IMR-90 (cell line): ENCODE measurements at regions of chr3 and their contacts with region 1.

Region 1: GRCh38 chr3:34725794-34726193 is 913.5 kb upstream of the ARPP21 start:
- DNase-seq: no peak
- ATAC-seq: no peak
- H3K4me3 ChIP-seq: no peak overlapping the region
- H3K27ac ChIP-seq: no peak overlapping the region
- H3K4me1 ChIP-seq: no peaks in the 10 kb centered on the region
- H3K27me3 ChIP-seq: no peaks in the 10 kb centered on the region
- CTCF ChIP-seq: no peak
- POLR2A ChIP-seq: no peak
- RAD21 ChIP-seq: no peak

Region 2: GRCh38 chr3:34239875-34240274 is 485.9 kb before region 1 on chr3:
- CTCF ChIA-PET with region 1: no interaction called
- POLR2A ChIA-PET with region 1: interaction called, 10 read pairs
- dilution Hi-C with region 1: no loop called
- in situ Hi-C with region 1: no loop called
- intact Hi-C with region 1: no loop called
- DNase-seq: no peak
- ATAC-seq: no peak
- H3K4me3 ChIP-seq: no peak overlapping the region
- H3K27ac ChIP-seq: no peak overlapping the region
- H3K4me1 ChIP-seq: no peaks in the 10 kb centered on the region
- H3K27me3 ChIP-seq: no peaks in the 10 kb centered on the region
- CTCF ChIP-seq: no peak
- POLR2A ChIP-seq: no peak
- RAD21 ChIP-seq: no peak